Posterior vena cava (tissue), 2 donors: ENCODE measurements at regions of chr6 and their contacts with region 1.

Region 1: DNA sequence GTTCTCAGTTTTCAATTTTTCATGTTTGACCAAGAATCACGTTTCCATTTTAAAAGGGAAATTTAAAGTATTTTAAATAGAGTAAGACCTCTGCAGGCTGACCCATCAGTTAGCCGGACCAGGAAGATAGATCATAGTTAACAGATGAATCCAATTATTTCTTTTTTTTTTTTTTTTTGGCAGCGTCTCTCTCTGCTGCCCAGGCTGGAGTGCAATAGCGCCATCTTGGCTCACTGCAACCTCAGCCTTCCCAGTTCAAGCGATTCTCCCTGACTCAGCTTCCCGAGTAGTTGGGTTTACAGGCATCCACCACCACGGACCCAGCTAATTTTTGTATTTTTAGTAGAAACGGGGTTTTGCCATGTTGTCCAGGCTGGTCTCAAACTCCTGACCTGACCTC is 256.7 kb upstream of the CNR1 start:
- DNase-seq: no peak

Region 2: GRCh38 chr6:88238065-88238464 is 184.8 kb before region 1 on chr6:
- intact Hi-C with region 1: no loop called
- DNase-seq: no peak

Region 3: GRCh38 chr6:88290411-88290810 is 132.4 kb before region 1 on chr6:
- intact Hi-C with region 1: no loop called
- DNase-seq: no peak

Region 4: DNA sequence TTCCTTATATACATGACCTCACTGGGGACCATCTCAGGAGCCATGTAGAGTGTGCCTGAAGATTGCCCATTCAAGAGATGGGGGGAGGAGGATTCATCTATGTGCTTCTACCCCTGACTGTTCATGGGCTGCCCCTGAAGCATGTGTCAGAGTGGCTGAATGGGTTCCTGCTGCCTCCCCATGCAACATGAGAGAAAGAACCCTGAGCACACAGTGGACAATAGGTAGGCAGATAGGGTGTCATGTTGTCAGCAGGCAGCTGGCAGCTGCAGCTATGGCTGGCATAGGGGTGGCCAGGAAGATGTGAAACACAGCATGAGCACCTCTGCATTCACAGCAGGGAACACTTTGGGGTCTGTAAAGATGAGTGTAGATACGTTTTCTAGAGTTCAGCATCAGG is 48.3 kb before region 1 on chr6:
- intact Hi-C with region 1: loop called in 1 of 2 experiments (anchors 2 kb)
- DNase-seq: no peak